ENCODE measurements at regions of chr3 and their contacts with region 1.

Region 1: DNA sequence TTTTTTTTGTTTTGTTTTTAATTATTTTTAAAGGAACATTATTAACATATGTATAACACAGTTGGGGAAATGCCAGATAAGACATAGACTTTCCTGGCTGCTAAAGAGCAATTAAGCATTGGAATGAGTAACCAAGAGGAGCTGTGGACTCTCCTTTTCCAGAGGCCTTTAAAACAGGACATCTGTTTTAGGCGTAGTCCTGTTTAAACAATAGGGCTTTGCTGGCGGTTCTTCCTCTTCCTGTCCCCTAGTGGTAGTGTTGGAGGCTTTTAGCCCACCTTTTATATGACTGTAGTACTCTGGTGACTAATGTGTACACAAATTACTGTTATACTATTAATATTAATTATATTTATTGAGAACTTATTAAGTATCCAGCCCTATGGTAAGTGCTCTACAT is 81.9 kb downstream of the PPARG start:
- DNase-seq: peak; percentile 36
- ATAC-seq: no peak
- H3K4me3 ChIP-seq: no peak overlapping the region
- H3K27ac ChIP-seq: no peak overlapping the region
- H3K4me1 ChIP-seq: peaks cover 14% of the 10 kb centered on the region
- H3K27me3 ChIP-seq: no peaks in the 10 kb centered on the region
- CTCF ChIP-seq: peak; percentile 17; the same call in 1 of the 2 replicates
- POLR2A ChIP-seq: no peak
- RAD21 ChIP-seq: no peak

Region 2: GRCh38 chr3:12308517-12308916 is 62.2 kb before region 1 on chr3:
- CTCF ChIA-PET with region 1: no interaction called
- POLR2A ChIA-PET with region 1: no interaction called
- dilution Hi-C with region 1: no loop called
- in situ Hi-C with region 1: no loop called
- intact Hi-C with region 1: loop called (anchors 5 kb)
- DNase-seq: peak; percentile 93
- ATAC-seq: peak; percentile 67
- H3K4me3 ChIP-seq: no peak overlapping the region
- H3K27ac ChIP-seq: peak overlapping the region; percentile 99; the same call in 1 of the 2 replicates
- H3K4me1 ChIP-seq: peaks cover 9% of the 10 kb centered on the region
- H3K27me3 ChIP-seq: no peaks in the 10 kb centered on the region
- CTCF ChIP-seq: no peak
- POLR2A ChIP-seq: no peak
- RAD21 ChIP-seq: no peak

Region 3: DNA sequence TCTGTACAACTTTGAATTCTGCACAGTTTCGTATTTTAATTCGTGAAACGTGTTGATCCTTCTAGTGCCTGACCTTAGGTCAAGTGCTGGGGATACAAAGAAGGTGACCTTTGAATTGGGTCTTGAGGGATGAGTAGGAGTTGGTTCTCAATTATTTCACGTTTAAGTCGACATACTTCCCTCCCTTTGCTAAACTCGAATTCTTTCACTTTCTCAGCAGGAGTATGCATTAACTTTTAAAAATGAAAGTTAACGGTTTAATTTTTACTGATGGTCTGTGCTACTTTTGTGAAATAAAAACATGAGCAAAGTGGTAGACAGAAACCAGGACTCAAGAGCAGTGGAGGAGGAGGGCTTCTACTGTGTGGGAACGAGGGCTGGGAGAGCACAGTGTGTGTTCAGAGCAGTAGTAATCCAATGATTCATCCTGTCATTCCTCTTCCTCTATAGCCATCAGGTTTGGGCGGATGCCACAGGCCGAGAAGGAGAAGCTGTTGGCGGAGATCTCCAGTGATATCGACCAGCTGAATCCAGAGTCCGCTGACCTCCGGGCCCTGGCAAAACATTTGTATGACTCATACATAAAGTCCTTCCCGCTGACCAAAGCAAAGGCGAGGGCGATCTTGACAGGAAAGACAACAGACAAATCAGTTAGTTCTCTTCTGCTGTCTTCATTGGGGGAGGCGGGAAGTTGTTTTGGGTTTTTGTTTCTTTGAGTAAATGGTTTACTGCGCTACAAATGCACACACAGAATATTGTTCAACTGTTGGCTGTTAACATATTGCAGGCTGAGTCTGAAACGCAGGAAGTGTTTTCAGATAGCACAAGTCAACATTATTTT is 34.9 kb after region 1 on chr3:
- CTCF ChIA-PET with region 1: no interaction called
- POLR2A ChIA-PET with region 1: no interaction called
- dilution Hi-C with region 1: no loop called
- in situ Hi-C with region 1: no loop called
- intact Hi-C with region 1: no loop called
- DNase-seq: peak; percentile 97
- ATAC-seq: peak; percentile 88
- H3K4me3 ChIP-seq: no peak overlapping the region
- H3K27ac ChIP-seq: no peak overlapping the region
- H3K4me1 ChIP-seq: peaks cover 6% of the 10 kb centered on the region
- H3K27me3 ChIP-seq: no peaks in the 10 kb centered on the region
- CTCF ChIP-seq: no peak
- POLR2A ChIP-seq: no peak
- RAD21 ChIP-seq: no peak